Activated CD4-positive, alpha-beta memory T cell treated with anti-CD3 and anti-CD28 coated beads for 36 hours (primary cell): ENCODE measurements at regions of chr12 and their contacts with region 1.

Region 1: GRCh38 chr12:12724661-12725545 is 7.7 kb downstream of the CDKN1B start:
- DNase-seq: peak; percentile 95
- H3K4me3 Mint-ChIP-seq: peak overlapping the region; percentile 95
- H3K27ac Mint-ChIP-seq: peak overlapping the region; percentile 97
- H3K4me1 Mint-ChIP-seq: peaks cover 50% of the 10 kb centered on the region
- H3K27me3 Mint-ChIP-seq: peaks cover 2% of the 10 kb centered on the region

Region 2: GRCh38 chr12:12486661-12487240 is 238.2 kb before region 1 on chr12:
- CTCF ChIA-PET with region 1: no interaction called
- POLR2A ChIA-PET with region 1: interaction called, 10 read pairs
- intact Hi-C with region 1: loop called (anchors 2 kb)
- DNase-seq: peak; percentile 59
- H3K4me3 Mint-ChIP-seq: peak overlapping the region; percentile 6
- H3K27ac Mint-ChIP-seq: peak overlapping the region; percentile 99
- H3K4me1 Mint-ChIP-seq: peaks cover 56% of the 10 kb centered on the region
- H3K27me3 Mint-ChIP-seq: no peaks in the 10 kb centered on the region

Region 3: DNA sequence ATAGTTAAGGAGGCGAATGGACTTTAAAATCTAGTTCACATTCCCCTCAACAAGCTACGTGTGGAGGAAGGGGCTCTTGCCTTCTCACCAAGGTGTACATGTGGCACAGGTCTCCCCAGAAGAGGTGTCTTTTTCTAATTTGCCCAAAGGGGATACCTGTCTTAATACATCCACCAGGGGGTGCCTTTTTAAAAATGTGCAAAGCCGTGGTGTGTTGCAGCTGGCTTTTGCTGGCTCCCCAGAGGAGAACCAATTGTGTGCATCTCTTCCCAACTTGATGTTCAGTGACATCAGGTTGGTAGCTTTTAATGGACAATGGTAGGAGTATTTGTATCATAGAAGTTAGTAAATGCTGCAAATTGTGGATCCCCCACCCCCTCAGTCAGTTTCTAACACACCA is 79.4 kb before region 1 on chr12:
- CTCF ChIA-PET with region 1: interaction called, 5 read pairs
- POLR2A ChIA-PET with region 1: interaction called, 5 read pairs
- intact Hi-C with region 1: loop called (anchors 5 kb)
- DNase-seq: peak; percentile 47
- H3K4me3 Mint-ChIP-seq: peak overlapping the region; percentile 29
- H3K27ac Mint-ChIP-seq: peak overlapping the region; percentile 82
- H3K4me1 Mint-ChIP-seq: peaks cover 21% of the 10 kb centered on the region
- H3K27me3 Mint-ChIP-seq: no peaks in the 10 kb centered on the region

Region 4: DNA sequence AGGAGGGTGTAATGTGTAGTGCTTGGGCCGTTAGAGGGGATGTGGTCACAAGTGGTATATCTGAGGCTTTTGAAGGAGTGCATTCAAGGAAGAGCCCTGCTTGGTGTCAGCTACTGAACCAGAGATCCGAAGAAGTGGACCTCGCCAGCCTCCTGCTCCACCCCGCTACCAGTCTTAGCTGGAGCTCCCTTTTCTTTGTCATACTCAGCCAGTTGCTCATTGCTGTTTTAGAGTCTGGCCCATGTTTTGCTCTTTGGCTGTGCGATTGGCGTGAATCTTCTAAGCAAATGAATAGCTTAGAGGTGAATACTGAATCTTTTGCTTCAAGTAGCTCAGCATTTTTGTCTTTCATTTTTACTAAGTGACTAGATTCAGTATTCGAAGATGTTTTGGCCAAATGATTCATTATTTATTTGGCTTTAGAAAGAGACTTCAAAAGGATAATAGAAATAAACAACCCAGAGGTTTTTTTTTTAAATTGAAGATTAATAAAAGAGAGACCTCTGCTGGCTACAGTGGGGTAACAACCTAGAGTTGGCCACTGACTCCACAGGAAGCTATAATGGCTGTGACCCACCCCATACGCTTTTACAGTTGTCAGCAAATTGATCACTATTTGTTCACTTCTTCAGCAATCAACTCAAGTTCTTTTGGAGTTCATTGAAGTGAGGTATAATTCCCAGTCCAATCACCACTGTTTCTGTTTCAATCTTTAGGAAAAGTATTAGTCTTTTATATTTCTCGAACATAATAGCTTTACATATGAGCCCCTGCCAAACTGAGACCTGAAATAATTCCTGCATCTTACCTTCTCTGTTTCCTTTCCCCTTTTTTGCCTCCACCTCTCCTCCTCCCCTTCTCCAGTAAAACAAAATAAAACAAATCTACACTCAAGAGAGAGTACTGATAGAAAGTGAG is 12.1 kb after region 1 on chr12:
- CTCF ChIA-PET with region 1: interaction called, 31 read pairs
- POLR2A ChIA-PET with region 1: interaction called, 46 read pairs
- intact Hi-C with region 1: loop called (anchors 1 kb)
- DNase-seq: peak; percentile 76
- H3K4me3 Mint-ChIP-seq: peak overlapping the region; percentile 59
- H3K27ac Mint-ChIP-seq: peak overlapping the region; percentile 88
- H3K4me1 Mint-ChIP-seq: peaks cover 46% of the 10 kb centered on the region
- H3K27me3 Mint-ChIP-seq: no peaks in the 10 kb centered on the region

Region 5: DNA sequence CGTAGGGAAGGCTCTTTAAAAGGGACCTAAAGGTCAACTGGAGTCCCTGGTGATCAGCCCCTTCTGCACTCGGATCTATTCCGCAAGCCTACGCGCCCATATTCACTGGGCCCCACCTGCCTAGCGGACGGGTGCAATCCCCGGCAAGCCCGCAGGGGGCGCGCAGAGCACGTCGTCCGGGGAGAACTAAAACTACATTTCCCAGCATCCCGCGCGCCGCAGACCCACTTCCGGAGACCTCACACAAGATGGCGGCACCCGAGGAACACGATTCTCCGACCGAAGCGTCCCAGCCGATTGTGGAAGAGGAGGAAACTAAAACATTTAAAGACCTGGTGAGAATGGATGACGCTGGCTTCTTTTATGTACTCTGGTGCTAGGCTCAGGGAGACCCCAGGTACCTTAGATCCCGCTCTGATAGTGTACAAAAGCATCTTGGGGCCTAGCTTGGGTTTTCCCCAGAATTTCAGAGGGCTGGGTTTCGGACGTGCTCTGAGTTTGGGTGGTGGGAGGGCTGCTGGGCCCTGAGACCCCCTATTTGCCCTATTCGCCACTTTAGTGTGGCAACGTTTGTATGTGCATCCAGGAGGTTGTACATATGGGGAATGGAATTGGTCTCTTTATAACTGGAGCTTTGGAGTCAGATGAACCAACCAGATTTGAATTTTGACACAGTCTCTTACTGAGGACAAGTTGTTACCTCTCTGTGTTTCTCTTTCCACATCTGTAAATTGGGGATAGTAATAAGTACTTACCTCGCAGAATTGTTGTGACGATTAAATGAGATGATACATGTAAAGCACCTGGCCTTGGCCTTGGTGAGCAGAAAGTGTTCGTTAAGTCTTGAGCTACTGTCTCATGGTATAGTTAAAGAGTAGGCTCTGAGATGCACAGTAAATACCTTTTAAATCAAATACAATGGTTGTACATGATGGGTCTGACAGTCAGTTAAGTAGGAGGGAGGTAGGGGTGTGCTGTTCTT is 88.5 kb after region 1 on chr12 and contains the start of gene DDX47:
- CTCF ChIA-PET with region 1: no interaction called
- POLR2A ChIA-PET with region 1: no interaction called
- intact Hi-C with region 1: loop called (anchors 2 kb)
- DNase-seq: peak; percentile 98
- H3K4me3 Mint-ChIP-seq: peak within 1 kb of the TSS; percentile 93
- H3K27ac Mint-ChIP-seq: peak within 1 kb of the TSS; percentile 95
- H3K4me1 Mint-ChIP-seq: peaks cover 59% of the 10 kb centered on the region
- H3K27me3 Mint-ChIP-seq: no peaks in the 10 kb centered on the region
- total RNA-seq, gene DDX47: 75.2 to 75.3 TPM

Region 6: DNA sequence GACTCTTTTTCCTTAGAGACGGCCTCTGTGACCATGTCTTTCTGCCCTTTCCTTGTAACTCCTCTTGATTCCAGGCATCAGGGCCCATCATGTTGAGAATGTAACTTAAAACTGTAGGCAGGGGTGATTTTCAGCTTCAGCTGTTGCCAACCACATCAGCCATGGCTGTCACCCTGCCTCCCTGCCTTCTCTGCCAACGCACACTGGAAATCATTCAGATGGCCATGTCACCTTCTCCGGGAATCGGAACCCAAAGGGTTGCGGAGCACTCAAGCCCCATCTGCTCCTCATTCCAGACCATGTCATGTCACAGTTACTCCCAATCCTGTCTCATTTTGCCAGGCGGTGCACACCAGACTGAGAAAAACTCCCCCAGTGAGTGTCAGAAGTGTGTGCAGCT is 543.7 kb after region 1 on chr12:
- CTCF ChIA-PET with region 1: no interaction called
- POLR2A ChIA-PET with region 1: no interaction called
- intact Hi-C with region 1: no loop called
- DNase-seq: no peak
- H3K4me3 Mint-ChIP-seq: no peak overlapping the region
- H3K27ac Mint-ChIP-seq: no peak overlapping the region
- H3K4me1 Mint-ChIP-seq: no peaks in the 10 kb centered on the region
- H3K27me3 Mint-ChIP-seq: peaks cover 9% of the 10 kb centered on the region

Region 7: GRCh38 chr12:14394317-14395073 is 1669.6 kb after region 1 on chr12:
- CTCF ChIA-PET with region 1: no interaction called
- POLR2A ChIA-PET with region 1: no interaction called
- intact Hi-C with region 1: loop called (anchors 5 kb)
- DNase-seq: peak; percentile 53
- H3K4me3 Mint-ChIP-seq: peak overlapping the region; percentile 74
- H3K27ac Mint-ChIP-seq: peak overlapping the region; percentile 93
- H3K4me1 Mint-ChIP-seq: peaks cover 79% of the 10 kb centered on the region
- H3K27me3 Mint-ChIP-seq: no peaks in the 10 kb centered on the region